MCF 10A (cell line): ENCODE measurements at regions of chr4 and their contacts with region 1.

Region 1: GRCh38 chr4:38319456-38320342 is 344.3 kb upstream of the KLF3 start:
- DNase-seq: peak; percentile 95
- H3K4me3 Mint-ChIP-seq: peak overlapping the region; percentile 23
- H3K27ac Mint-ChIP-seq: peak overlapping the region; percentile 88
- H3K4me1 Mint-ChIP-seq: peaks cover 28% of the 10 kb centered on the region
- H3K27me3 Mint-ChIP-seq: no peaks in the 10 kb centered on the region
- CTCF ChIP-seq: peak; percentile 96

Region 2: DNA sequence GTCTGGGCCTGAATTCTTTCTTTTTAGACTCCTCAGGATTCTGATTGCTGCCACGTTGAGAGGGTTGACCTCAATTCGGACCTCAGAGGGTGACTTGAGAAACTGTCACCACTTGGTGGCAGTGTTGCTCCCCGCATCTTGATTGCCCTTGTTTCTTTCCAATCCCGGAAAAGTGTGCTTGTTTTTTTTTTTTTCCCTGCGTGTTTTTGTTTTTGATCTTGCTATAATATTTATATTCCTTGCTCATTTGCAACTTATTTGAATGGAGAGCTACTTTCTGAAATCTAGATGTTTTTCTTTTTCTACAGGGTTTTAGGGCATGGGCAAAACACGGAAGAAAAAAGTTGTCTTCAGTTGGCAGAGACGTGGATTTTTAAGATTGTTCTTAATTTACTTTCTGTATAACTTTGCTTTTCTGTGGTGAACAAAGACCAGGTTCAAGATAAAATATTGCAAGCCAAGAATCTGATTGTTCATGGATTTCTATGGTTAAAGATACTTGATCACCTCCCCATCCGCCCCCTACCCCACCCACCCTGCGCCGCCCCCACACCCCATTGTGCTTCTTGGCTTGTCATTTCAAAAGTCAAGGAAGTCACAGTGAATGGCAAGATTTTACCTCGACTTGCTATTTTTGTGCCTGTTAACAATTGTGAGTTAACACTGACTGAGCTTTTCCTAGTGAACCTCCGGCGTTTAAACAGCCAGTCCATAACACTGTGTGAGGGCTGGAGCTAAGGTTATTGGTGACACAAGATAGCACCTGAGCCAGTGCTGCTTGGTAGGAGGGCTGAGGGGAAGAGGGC is 257.4 kb before region 1 on chr4:
- CTCF ChIA-PET with region 1: interaction called, 3 read pairs
- POLR2A ChIA-PET with region 1: interaction called, 3 read pairs
- intact Hi-C with region 1: loop called (anchors 2 kb)
- DNase-seq: peak; percentile 83
- H3K4me3 Mint-ChIP-seq: peak overlapping the region; percentile 66
- H3K27ac Mint-ChIP-seq: peak overlapping the region; percentile 57
- H3K4me1 Mint-ChIP-seq: peaks cover 5% of the 10 kb centered on the region
- H3K27me3 Mint-ChIP-seq: no peaks in the 10 kb centered on the region
- CTCF ChIP-seq: peak; percentile 83

Region 3: GRCh38 chr4:38236003-38236402 is 83.7 kb before region 1 on chr4:
- CTCF ChIA-PET with region 1: no interaction called
- POLR2A ChIA-PET with region 1: no interaction called
- intact Hi-C with region 1: no loop called
- DNase-seq: no peak
- H3K4me3 Mint-ChIP-seq: no peak overlapping the region
- H3K27ac Mint-ChIP-seq: peak overlapping the region; percentile 9
- H3K4me1 Mint-ChIP-seq: peaks cover 10% of the 10 kb centered on the region
- H3K27me3 Mint-ChIP-seq: no peaks in the 10 kb centered on the region
- CTCF ChIP-seq: no peak

Region 4: GRCh38 chr4:38334810-38335537 is 15.3 kb after region 1 on chr4:
- CTCF ChIA-PET with region 1: interaction called, 7 read pairs
- POLR2A ChIA-PET with region 1: interaction called, 10 read pairs
- intact Hi-C with region 1: no loop called
- DNase-seq: peak; percentile 39
- H3K4me3 Mint-ChIP-seq: no peak overlapping the region
- H3K27ac Mint-ChIP-seq: peak overlapping the region; percentile 13
- H3K4me1 Mint-ChIP-seq: peaks cover 12% of the 10 kb centered on the region
- H3K27me3 Mint-ChIP-seq: no peaks in the 10 kb centered on the region
- CTCF ChIP-seq: no peak

Region 5: GRCh38 chr4:38461342-38461741 is 141.6 kb after region 1 on chr4:
- CTCF ChIA-PET with region 1: no interaction called
- POLR2A ChIA-PET with region 1: no interaction called
- intact Hi-C with region 1: no loop called
- DNase-seq: no peak
- H3K4me3 Mint-ChIP-seq: no peak overlapping the region
- H3K27ac Mint-ChIP-seq: no peak overlapping the region
- H3K4me1 Mint-ChIP-seq: no peaks in the 10 kb centered on the region
- H3K27me3 Mint-ChIP-seq: no peaks in the 10 kb centered on the region
- CTCF ChIP-seq: no peak

Region 6: DNA sequence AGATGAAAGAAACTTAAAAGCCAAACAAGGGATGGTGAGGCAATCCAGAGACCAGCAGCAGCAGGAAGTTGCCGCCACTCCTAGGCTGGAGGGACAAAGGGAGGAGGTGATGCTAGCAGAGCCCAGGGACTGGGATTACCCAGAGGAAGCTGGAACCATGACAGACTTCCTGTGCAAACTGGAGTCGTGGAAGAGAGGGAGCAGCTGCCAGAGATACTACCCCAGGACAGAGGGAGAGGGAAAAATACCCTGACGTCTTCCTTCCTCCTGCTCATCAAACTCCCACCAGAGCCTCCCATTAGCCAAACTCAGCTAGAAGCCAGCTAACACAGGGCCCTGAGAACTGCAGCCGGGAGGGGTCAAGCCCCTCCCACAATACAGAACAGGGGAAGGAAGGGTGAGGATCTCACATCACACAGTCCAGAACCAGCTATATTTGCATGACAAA is 243.1 kb after region 1 on chr4:
- CTCF ChIA-PET with region 1: interaction called, 5 read pairs
- POLR2A ChIA-PET with region 1: no interaction called
- intact Hi-C with region 1: loop called (anchors 10 kb)
- DNase-seq: peak; percentile 67
- H3K4me3 Mint-ChIP-seq: no peak overlapping the region
- H3K27ac Mint-ChIP-seq: peak overlapping the region; percentile 16
- H3K4me1 Mint-ChIP-seq: peaks cover 44% of the 10 kb centered on the region
- H3K27me3 Mint-ChIP-seq: no peaks in the 10 kb centered on the region
- CTCF ChIP-seq: no peak

Region 7: GRCh38 chr4:38620790-38621684 is 301.3 kb after region 1 on chr4:
- CTCF ChIA-PET with region 1: interaction called, 3 read pairs
- POLR2A ChIA-PET with region 1: interaction called, 18 read pairs
- intact Hi-C with region 1: no loop called
- DNase-seq: peak; percentile 95
- H3K4me3 Mint-ChIP-seq: no peak overlapping the region
- H3K27ac Mint-ChIP-seq: peak overlapping the region; percentile 57
- H3K4me1 Mint-ChIP-seq: peaks cover 29% of the 10 kb centered on the region
- H3K27me3 Mint-ChIP-seq: no peaks in the 10 kb centered on the region
- CTCF ChIP-seq: no peak

Region 8: GRCh38 chr4:38675146-38676121 is 355.7 kb after region 1 on chr4:
- CTCF ChIA-PET with region 1: interaction called, 60 read pairs
- POLR2A ChIA-PET with region 1: interaction called, 192 read pairs
- intact Hi-C with region 1: loop called (anchors 1 kb)
- DNase-seq: peak; percentile 87
- H3K4me3 Mint-ChIP-seq: peak overlapping the region; percentile 45
- H3K27ac Mint-ChIP-seq: no peak overlapping the region
- H3K4me1 Mint-ChIP-seq: peaks cover 68% of the 10 kb centered on the region
- H3K27me3 Mint-ChIP-seq: no peaks in the 10 kb centered on the region
- CTCF ChIP-seq: peak; percentile 84